AG04449 (cell line): ENCODE measurements at regions of chr10 and their contacts with region 1.

Region 1: DNA sequence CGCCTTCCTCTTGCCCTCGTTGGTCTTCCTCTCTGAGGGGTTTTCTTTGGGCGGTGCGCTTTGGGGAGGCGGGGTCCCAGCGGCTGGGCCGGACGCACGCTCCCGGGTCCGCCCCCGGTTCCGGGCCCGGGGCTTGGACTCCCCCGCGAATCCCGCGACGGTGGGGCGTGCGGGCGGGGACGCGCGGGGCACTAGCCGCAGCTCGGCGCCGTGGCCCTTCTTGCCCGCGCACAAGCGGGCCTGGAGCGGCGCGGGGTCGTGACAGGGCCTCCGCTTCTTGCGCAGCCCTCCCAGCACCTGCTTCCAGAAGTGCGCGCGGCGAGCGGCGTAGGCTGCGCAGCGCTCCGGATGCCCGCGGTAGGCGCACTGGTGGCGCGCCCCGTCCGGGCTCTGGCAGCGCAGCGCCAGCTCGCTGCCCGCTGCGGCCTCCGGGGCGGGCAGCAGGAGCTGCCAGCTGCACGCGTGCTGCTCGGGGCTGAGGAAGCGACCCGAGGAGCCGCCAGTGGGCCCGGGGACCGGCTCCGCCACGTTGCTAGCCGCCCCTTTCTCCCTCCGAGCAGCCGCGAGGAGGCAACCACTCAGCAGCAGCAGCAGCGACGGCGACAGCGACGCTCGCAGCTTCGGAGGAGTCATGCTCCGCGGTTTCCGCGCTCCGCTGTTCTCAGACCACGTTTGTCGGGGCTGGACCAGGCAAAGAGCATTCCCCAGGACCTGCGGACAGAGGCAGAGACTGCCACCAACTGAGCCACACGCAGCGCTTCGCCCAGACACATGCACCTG is 759 bp downstream of the FGFBP3 start:
- DNase-seq: no peak
- H3K4me3 ChIP-seq: peak overlapping the region; percentile 71
- CTCF ChIP-seq: peak; percentile 56

Region 2: DNA sequence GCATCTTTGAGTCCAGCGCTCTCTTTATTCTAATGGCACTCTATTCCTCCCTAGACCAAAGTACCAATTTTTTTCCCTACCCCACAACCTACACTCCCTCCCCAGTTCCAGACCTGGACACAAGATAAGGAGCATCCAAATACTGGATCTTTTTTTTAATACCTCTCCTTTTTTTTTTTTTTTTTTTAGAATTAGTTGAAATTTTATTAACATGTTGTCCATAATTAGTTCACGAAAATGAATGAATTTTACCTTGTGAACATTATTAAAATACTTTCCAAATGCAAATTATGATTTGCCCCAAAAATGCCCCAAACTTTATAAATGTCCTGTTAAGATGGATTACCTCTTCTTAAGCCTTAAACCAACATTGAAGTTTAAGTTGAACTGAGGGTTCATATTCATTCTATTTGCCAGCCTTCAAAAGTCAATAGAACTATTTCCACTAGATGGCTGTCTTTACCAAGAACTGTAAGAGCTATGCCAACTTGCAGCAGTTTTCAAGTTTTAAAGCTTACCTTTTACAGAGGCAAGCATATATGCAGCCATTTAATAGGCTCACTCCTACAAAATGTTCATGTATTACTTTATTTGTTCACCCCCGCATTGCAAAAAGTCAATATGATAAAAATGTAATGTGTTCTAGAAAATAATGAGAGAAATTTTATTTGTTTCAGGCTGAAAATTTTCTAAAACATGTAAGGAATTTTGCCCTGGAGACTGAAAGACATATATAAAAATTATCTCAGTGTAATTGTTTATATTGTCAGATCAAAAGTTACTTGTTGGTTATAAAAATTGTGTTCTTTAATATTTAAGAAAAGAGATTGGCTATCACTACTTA is 150.0 kb before region 1 on chr10:
- CTCF ChIA-PET with region 1: interaction called, 76 read pairs
- POLR2A ChIA-PET with region 1: no interaction called
- DNase-seq: peak; percentile 14
- H3K4me3 ChIP-seq: no peak overlapping the region
- CTCF ChIP-seq: peak; percentile 28

Region 3: DNA sequence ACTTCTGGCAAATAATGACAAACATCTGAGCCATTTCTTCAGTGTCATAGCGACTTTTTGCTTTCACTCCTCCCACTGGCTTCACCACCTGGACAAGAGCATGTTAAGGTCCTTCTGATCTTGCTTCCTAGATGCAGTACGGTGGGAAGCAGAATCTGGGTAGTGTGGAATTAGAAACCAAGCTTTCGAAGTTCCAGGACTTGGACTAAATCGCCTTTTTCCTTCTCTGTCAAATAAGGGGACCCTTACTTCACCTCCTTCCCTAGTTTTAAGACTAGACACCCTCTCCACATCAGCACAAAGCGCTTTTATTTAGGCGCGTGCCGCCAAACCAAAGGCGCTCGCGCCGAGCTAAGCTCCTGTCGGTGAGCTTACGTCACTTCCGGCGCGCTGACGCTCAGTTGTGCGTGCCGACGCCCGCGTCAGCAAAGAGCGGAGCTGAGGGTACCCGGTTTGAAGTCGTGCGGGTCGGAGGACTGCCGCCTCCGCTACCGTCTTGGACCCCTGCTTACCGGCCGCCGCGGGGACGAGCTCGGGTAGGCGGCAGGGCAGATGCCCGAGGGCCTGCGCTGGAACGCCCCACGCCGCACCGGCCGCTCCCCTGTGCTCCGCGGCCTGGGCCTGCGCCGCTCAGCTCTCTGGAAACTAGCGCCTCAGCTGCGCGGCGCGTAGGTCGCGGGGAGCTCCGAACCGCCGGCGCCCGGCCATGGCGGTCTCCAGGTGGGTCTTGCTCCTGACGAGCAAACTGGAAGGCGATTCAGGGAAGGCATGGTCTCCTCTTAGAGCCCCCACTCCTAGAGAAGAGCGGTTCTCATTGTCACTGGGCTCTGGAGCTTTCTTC is 15.1 kb after region 1 on chr10 and contains the start of gene BTAF1:
- CTCF ChIA-PET with region 1: interaction called, 38 read pairs
- POLR2A ChIA-PET with region 1: interaction called, 5 read pairs
- DNase-seq: peak; percentile 63
- H3K4me3 ChIP-seq: peak within 1 kb of the TSS; percentile 89
- CTCF ChIP-seq: no peak